Mammary epithelial cell (primary cell): ENCODE measurements at regions of chr7 and their contacts with region 1.

Region 1: GRCh38 chr7:116525913-116526861 is 1.4 kb downstream of the CAV1 start:
- DNase-seq: peak; percentile 77
- H3K4me3 ChIP-seq: peak overlapping the region; percentile 72 to 78 (median 76)
- H3K27ac ChIP-seq: peak overlapping the region; percentile 96
- H3K4me1 ChIP-seq: peaks cover 62% of the 10 kb centered on the region
- H3K27me3 ChIP-seq: no peaks in the 10 kb centered on the region
- CTCF ChIP-seq: peak; percentile 47 to 62

Region 2: GRCh38 chr7:116173051-116174028 is 352.8 kb before region 1 on chr7:
- CTCF ChIA-PET with region 1: no interaction called
- dilution Hi-C with region 1: no loop called
- in situ Hi-C with region 1: loop called in 1 of 2 experiments (anchors 25 kb)
- intact Hi-C with region 1: loop called (anchors 2 kb)
- DNase-seq: peak; percentile 54
- H3K4me3 ChIP-seq: no peak overlapping the region
- H3K27ac ChIP-seq: no peak overlapping the region
- H3K4me1 ChIP-seq: peaks cover 25% of the 10 kb centered on the region
- H3K27me3 ChIP-seq: no peaks in the 10 kb centered on the region
- CTCF ChIP-seq: peak; percentile 35 to 46

Region 3: DNA sequence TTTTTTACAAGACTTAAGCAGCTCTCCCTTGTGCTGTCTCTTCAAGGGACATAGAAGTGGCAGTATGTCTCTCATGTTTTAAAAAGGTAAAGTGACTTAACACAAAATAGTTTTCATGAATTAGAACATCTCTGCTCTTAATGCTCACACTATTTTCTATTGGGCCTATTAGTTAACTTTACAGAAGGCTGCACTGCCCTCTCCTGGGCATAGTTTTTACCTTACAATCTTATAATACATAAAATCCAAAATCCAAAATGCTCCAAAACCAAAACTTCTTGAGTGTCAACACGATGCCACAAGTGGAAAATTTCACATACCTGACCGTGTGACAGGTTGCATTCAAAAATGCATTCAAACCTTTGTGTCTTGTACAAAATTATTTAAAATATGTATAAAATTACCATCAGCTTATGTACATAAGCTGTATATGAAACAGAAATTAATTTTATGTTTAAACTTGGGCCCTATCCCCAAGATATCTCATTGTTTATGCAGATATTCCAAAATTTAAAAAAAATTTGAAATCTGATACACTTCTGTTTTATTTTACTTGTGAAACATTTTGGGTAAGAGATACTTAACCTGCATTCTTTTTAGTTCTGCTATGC is 290.1 kb before region 1 on chr7:
- CTCF ChIA-PET with region 1: no interaction called
- dilution Hi-C with region 1: no loop called
- in situ Hi-C with region 1: no loop called
- intact Hi-C with region 1: no loop called
- DNase-seq: no peak
- H3K4me3 ChIP-seq: no peak overlapping the region
- H3K27ac ChIP-seq: peak overlapping the region; percentile 7
- H3K4me1 ChIP-seq: peaks cover 28% of the 10 kb centered on the region
- H3K27me3 ChIP-seq: no peaks in the 10 kb centered on the region
- CTCF ChIP-seq: peak; percentile 45 to 49

Region 4: DNA sequence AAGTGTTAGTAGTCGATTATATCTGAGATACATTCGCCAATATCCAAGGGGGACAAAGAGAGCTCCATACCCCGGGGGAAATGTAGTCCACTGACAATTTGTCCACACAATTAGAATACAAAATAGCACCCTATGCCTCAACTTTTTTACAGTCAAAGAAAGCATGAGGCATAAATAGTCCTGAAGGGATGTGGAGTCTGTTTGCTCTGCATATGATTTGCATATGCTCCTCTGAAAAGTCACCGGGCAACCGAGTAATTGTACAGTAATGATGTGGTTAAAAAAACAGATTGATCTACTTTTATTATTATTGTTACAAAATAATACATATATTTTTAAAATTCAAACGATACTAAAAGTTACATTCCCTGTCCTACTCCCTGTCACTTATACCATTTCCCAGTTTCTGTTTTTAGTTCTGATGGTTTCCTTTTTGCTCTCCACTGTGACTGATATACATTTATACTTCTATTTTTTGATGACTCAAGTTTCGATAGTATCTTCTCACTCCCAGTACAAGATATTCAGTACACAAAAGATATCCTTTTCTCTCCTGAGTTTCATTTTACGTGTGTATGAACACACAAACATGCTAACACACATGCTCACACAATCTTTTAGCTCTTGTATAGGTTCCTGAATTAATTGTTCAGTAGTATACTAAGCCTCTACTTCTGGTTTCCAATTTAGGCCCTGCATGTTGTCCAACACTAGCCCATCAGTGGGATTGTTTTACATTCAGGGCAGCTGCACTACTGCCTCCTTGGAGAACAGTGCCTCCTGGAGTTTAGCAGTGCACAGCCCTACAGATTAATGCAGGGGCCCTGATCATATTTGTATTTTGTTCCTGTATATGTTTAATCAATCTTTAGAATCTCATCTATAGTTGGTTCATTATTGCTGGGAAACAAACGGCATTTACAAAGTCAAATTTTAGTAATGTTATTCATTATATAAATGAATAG is 185.0 kb before region 1 on chr7:
- CTCF ChIA-PET with region 1: no interaction called
- dilution Hi-C with region 1: no loop called
- in situ Hi-C with region 1: no loop called
- intact Hi-C with region 1: loop called (anchors 1 kb)
- DNase-seq: no peak
- H3K4me3 ChIP-seq: no peak overlapping the region
- H3K27ac ChIP-seq: no peak overlapping the region
- H3K4me1 ChIP-seq: peaks cover 14% of the 10 kb centered on the region
- H3K27me3 ChIP-seq: no peaks in the 10 kb centered on the region
- CTCF ChIP-seq: peak; percentile 28 to 57

Region 5: GRCh38 chr7:116443101-116443523 is 83.1 kb before region 1 on chr7:
- CTCF ChIA-PET with region 1: interaction called, 5 read pairs
- dilution Hi-C with region 1: no loop called
- in situ Hi-C with region 1: no loop called
- intact Hi-C with region 1: loop called (anchors 1 kb)
- DNase-seq: peak; percentile 90
- H3K4me3 ChIP-seq: no peak overlapping the region
- H3K27ac ChIP-seq: peak overlapping the region; percentile 98
- H3K4me1 ChIP-seq: peaks cover 30% of the 10 kb centered on the region
- H3K27me3 ChIP-seq: no peaks in the 10 kb centered on the region
- CTCF ChIP-seq: no peak

Region 6: DNA sequence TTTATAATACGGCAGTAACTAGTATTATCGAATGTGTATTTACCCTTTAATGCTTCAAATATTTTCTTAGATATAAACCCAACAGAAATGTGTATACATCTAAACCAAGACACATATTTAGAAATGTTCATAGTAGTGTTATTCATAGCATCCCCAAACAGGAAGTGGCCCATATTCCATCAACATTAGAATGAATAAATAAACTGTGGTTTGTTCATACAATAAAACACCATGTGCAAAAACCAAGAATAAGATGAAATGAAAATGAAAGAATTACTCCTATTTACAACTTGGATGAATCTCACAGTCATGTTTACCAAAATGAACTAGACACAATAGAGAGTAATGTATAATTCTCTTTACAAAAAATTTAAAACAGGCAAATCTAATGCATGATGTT is 35.8 kb before region 1 on chr7:
- CTCF ChIA-PET with region 1: no interaction called
- dilution Hi-C with region 1: no loop called
- in situ Hi-C with region 1: no loop called
- intact Hi-C with region 1: no loop called
- DNase-seq: no peak
- H3K4me3 ChIP-seq: no peak overlapping the region
- H3K27ac ChIP-seq: no peak overlapping the region
- H3K4me1 ChIP-seq: peaks cover 1% of the 10 kb centered on the region
- H3K27me3 ChIP-seq: no peaks in the 10 kb centered on the region
- CTCF ChIP-seq: no peak

Region 7: DNA sequence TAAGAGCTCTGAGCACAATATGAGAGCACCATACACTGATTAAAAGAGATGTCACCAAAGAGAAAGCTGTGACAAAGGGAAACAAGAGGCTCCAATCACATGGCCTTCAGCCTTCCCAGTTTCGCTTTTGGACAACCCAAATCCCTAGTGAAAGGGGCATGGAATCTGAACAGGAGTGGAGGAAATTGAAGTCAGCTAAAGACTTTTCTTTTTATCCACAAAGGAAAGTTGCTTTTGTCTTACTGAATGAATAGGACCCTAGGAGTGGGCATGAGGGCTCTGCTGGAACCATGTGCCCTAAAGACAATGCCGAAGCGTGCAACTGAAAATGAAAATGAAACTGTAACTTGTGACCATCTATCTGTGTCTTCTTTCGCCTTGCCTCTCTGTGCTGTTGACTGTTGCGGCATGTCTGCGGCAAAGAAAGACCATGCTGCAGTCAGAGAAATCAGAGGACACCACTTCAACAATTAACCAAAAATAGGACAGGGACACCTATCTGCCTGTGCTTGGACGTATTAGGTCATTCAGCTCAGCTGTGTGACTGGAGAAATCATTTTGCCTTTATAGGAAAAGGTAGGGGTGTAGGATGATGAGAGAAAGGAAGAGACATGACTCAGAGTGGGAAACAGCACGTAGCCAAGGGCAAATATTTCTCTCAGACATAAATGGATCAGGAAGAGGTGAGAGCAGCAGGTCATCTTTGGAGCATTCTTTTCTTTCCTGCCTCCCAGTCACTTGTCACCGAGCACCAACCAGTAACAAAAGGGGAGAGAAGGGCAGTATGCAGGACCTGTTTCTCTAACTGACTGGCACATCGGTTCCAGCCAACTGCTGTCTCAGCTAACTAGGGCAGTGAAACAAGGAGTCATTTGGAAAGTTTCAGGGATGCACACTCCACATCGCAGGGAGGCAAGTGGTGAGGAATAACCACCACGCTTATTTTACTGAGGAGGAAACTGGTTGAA is 14.4 kb before region 1 on chr7:
- CTCF ChIA-PET with region 1: no interaction called
- dilution Hi-C with region 1: no loop called
- in situ Hi-C with region 1: no loop called
- intact Hi-C with region 1: loop called (anchors 1 kb)
- DNase-seq: peak; percentile 90
- H3K4me3 ChIP-seq: peak overlapping the region; percentile 40 to 61 (median 57)
- H3K27ac ChIP-seq: peak overlapping the region; percentile 90
- H3K4me1 ChIP-seq: peaks cover 22% of the 10 kb centered on the region
- H3K27me3 ChIP-seq: no peaks in the 10 kb centered on the region
- CTCF ChIP-seq: no peak

Region 8: DNA sequence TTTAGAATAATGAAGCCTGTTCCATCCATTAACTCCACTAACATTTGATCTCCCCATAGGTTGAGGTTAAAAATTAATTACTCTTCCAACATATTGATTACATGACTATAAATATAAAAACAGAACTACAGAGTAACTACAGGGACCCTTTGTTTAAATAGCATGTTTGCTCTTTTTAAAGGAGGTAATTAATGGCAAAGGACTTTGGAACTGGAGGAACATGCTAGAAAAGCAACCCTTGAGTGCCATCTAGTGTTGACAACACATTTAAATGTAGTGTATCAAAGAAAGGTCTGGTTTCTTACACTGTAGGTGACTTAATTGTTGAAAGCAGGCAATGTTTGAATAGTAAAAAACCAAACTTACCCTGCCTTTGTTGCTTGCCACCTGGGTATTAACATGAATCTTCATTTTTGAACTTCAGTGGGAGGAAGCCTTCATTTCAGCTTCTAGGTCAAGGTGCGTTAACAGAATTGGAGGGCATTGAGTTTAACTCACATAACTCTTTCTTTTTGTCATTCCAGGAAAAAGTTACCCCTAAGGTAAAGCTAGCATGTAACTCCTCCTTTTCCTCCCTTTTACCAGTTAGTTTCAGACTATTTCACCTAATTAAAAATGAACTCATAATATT is 283.6 kb after region 1 on chr7:
- CTCF ChIA-PET with region 1: no interaction called
- dilution Hi-C with region 1: no loop called
- in situ Hi-C with region 1: no loop called
- intact Hi-C with region 1: loop called (anchors 2 kb)
- DNase-seq: peak; percentile 56
- H3K4me3 ChIP-seq: no peak overlapping the region
- H3K27ac ChIP-seq: no peak overlapping the region
- H3K4me1 ChIP-seq: peaks cover 3% of the 10 kb centered on the region
- H3K27me3 ChIP-seq: no peaks in the 10 kb centered on the region
- CTCF ChIP-seq: peak; percentile 45 to 65